ENCODE measurements at regions of chr11 and their contacts with region 1.

Region 1: GRCh38 chr11:123560006-123560405 is 94.4 kb downstream of the SCN3B start:
- DNase-seq: peak; percentile 49 to 78 (median 68)
- ATAC-seq: peak; percentile 34 to 79 (median 72)
- H3K4me3 ChIP-seq: peak overlapping the region in 11 of 12 donors; percentile 11 to 56 (median 38)
- H3K27ac ChIP-seq: peak overlapping the region in 10 of 12 donors; percentile 14 to 80 (median 56)
- H3K4me1 ChIP-seq: peaks cover 4 to 54% (median 28%) of the 10 kb centered on the region in 12 donors
- H3K27me3 ChIP-seq: no peaks in the 10 kb centered on the region
- CTCF ChIP-seq: no peak
- POLR2A ChIP-seq: no peak

Region 2: DNA sequence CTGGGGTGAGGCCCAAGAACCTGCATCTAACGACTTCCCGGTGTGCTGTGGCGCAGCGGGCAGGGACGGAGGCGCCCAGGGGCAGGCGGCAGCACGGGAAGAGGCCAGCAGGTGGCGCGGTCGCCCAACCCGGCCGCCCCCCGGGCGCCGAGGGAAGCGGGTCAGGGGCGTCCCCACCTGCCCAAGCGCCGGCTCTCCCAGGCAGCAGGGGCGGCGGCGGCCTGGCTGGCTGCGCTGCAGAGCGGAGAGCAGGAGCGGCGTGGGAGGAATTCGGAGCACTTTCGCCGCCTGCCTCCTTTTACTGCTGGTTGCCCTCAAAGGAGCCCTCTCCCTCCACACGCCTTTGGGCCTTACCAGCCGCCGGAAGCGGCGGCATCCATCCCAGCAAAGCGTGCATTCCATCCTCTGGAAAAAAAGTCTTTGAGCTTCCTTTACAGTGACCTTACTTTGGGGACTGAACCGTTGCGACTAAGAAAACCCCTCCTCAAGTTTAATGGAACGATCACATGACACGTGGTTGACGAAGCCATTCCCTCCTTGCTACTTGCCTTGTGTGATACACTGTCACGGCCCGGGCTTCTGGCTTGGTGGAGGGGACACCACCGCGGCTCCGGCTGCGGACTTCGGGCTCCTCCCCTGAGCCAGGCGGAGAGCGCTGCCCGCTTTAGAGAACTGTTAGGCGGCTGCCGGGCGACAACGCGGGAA is 258.2 kb before region 1 on chr11:
- intact Hi-C with region 1: loop called in 1 of 10 experiments (anchors 10 kb)
- DNase-seq: peak; percentile 56 to 86 (median 68)
- ATAC-seq: peak; percentile 29 to 92 (median 81)
- H3K4me3 ChIP-seq: peak overlapping the region; percentile 24 to 60 (median 45)
- H3K27ac ChIP-seq: peak overlapping the region in 5 of 12 donors; percentile 15 to 50 (median 33)
- H3K4me1 ChIP-seq: peaks cover 0 to 24% (median 13%) of the 10 kb centered on the region in 12 donors
- H3K27me3 ChIP-seq: peaks cover 0 to 18% (median 0%) of the 10 kb centered on the region in 9 donors
- CTCF ChIP-seq: peak; percentile 75 to 96 (median 91)
- POLR2A ChIP-seq: no peak

Region 3: DNA sequence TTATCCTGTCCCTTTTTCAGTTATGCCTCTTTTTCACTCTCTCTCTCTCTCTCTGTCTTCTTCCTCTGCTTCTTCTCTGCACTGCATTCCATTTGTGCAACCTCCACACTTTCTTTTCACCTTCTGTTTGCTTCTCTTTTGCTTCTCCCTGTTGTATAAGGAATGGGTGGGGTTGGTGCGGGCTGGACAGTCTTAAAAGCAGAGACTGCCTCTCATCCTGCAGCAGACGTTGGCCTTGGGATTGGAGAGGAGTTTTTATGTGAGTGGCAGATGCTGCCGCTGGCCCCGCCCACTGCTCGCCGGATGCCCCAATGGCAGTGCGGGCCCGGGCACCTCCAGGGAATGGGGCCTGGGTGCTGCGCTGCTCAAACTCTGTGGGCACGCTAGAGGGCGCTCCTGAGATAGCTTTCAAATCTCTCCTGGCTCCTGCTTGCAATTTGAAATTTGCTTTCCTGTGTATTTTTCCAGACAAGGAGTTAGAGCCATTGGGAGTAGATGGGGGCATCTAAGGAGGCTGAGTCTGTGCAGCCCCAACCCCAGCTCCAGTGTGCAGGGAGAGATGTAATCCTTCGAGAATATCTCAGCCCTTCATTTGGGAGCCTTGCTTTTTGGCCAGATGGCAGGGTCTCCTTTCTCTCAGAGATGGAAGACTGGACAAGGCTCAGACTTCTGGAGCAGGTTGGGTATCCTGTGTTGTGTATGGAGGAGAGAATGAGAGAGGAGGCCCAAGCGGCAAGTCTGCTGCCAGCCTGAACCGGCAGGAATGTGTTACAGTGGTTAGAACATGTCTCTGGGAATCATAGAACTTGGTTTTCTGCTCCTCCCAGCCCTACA is 48.8 kb before region 1 on chr11:
- intact Hi-C with region 1: loop called in 5 of 10 experiments (anchors 5 kb)
- DNase-seq: peak; percentile 77 to 90 (median 83)
- ATAC-seq: peak; percentile 77 to 93 (median 91)
- H3K4me3 ChIP-seq: no peak overlapping the region
- H3K27ac ChIP-seq: no peak overlapping the region
- H3K4me1 ChIP-seq: peaks cover 0 to 9% (median 0%) of the 10 kb centered on the region in 12 donors
- H3K27me3 ChIP-seq: no peaks in the 10 kb centered on the region
- CTCF ChIP-seq: peak; percentile 79 to 96 (median 88)
- POLR2A ChIP-seq: no peak

Region 4: GRCh38 chr11:123519055-123519796 is 40.8 kb before region 1 on chr11:
- intact Hi-C with region 1: loop called in 5 of 10 experiments (anchors 5 kb)
- DNase-seq: no peak
- ATAC-seq: peak; percentile 16 to 73 (median 64)
- H3K4me3 ChIP-seq: no peak overlapping the region
- H3K27ac ChIP-seq: peak overlapping the region; percentile 24 to 86 (median 62)
- H3K4me1 ChIP-seq: peaks cover 0 to 31% (median 13%) of the 10 kb centered on the region in 12 donors
- H3K27me3 ChIP-seq: no peaks in the 10 kb centered on the region
- CTCF ChIP-seq: no peak
- POLR2A ChIP-seq: no peak

Region 5: DNA sequence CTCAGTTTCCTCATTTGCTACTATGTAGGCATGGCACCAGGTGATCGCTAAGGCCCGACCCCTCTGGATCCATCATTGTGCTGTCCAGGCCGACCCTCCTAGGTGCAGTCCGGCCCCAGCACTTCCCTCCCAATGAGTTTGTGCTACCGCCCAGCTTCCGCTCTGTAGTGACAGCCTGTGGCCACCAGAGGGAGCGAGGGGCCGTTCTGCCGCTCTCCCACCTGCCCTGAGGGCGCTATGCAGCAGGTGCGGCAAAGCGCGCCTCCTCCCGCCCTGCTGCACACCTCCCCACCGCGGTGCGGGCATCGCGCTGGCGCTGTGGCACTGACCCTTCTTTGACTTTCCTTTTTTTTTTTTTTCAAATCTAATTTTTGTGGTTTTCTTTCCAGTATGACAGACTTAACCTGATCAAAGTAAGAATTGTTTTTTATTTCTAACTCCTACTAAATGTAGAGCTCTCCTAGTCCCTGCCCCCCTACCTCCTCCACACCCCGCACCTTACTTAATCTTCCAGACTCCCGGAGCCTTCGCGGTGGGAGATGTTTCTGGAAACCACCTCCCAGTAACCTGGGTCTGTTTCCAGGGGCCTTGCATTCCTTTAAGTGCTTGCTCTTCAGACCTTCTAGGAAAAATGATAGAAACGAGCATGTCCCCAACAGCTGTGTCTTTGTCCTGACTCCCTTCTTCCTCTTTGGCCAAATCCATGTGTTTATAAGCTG is 20.7 kb after region 1 on chr11:
- intact Hi-C with region 1: loop called in 1 of 10 experiments (anchors 2 kb)
- DNase-seq: peak in 4 of 5 donors; percentile 43 to 73 (median 57)
- ATAC-seq: peak; percentile 45 to 58 (median 52)
- H3K4me3 ChIP-seq: no peak overlapping the region
- H3K27ac ChIP-seq: no peak overlapping the region
- H3K4me1 ChIP-seq: peaks cover 0 to 14% (median 2%) of the 10 kb centered on the region in 12 donors
- H3K27me3 ChIP-seq: no peaks in the 10 kb centered on the region
- CTCF ChIP-seq: peak; percentile 79 to 92 (median 88)
- POLR2A ChIP-seq: no peak

Measured in heart left ventricle (tissue), 16 donors.